Calu3 (cell line): ENCODE measurements at regions of chr12 and their contacts with region 1.

Region 1: GRCh38 chr12:83005534-83006197 is 319.0 kb downstream of the TMTC2 start:
- DNase-seq: no peak
- H3K4me3 Mint-ChIP-seq: no peak overlapping the region
- H3K27ac Mint-ChIP-seq: no peak overlapping the region
- H3K4me1 Mint-ChIP-seq: no peaks in the 10 kb centered on the region
- H3K27me3 Mint-ChIP-seq: no peaks in the 10 kb centered on the region
- CTCF ChIP-seq: no peak

Region 2: DNA sequence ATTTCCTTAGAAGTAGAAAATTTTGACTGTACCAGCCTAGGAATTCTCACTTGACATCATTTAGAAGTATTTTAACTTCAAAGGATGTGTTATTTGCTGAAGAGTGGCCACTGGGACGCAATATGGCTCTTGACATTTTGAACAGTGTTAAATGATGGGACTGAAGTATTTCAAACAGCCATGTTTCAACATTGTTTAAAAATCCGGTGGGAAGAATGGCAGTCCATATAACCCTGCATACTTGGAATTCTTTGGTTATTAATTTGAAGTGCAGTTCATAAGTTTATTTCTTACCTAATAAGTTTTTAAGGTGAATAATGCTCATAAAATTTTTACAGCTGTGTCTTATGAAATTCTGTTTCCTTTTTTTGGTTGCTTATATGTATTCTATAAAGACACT is 310.7 kb before region 1 on chr12:
- CTCF ChIA-PET with region 1: no interaction called
- intact Hi-C with region 1: no loop called
- DNase-seq: no peak
- H3K4me3 Mint-ChIP-seq: no peak overlapping the region
- H3K27ac Mint-ChIP-seq: no peak overlapping the region
- H3K4me1 Mint-ChIP-seq: peaks cover 15% of the 10 kb centered on the region
- H3K27me3 Mint-ChIP-seq: no peaks in the 10 kb centered on the region
- CTCF ChIP-seq: no peak

Region 3: DNA sequence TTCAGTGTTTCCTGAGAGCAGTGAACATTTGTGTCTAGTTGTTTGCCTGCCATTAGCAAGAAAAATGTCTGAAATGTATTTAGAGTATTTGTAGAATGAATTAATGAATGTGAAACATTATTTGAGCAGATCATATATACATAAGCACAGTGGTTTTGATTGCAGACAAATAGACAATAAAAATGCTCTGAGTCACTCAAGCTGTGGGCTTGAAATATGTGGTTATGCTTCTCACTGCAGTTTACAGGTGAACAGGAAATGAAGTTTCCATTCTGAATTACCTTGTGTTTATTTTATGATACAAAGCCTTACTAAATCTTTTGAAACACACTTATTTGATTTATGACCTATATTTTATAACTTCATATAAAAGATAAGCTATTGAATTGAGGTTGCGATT is 508.7 kb after region 1 on chr12:
- CTCF ChIA-PET with region 1: no interaction called
- intact Hi-C with region 1: loop called (anchors 10 kb)
- DNase-seq: peak; percentile 9
- H3K4me3 Mint-ChIP-seq: no peak overlapping the region
- H3K27ac Mint-ChIP-seq: no peak overlapping the region
- H3K4me1 Mint-ChIP-seq: peaks cover 8% of the 10 kb centered on the region
- H3K27me3 Mint-ChIP-seq: no peaks in the 10 kb centered on the region
- CTCF ChIP-seq: no peak